ENCODE measurements at regions of chr3 and their contacts with region 1.

Region 1: DNA sequence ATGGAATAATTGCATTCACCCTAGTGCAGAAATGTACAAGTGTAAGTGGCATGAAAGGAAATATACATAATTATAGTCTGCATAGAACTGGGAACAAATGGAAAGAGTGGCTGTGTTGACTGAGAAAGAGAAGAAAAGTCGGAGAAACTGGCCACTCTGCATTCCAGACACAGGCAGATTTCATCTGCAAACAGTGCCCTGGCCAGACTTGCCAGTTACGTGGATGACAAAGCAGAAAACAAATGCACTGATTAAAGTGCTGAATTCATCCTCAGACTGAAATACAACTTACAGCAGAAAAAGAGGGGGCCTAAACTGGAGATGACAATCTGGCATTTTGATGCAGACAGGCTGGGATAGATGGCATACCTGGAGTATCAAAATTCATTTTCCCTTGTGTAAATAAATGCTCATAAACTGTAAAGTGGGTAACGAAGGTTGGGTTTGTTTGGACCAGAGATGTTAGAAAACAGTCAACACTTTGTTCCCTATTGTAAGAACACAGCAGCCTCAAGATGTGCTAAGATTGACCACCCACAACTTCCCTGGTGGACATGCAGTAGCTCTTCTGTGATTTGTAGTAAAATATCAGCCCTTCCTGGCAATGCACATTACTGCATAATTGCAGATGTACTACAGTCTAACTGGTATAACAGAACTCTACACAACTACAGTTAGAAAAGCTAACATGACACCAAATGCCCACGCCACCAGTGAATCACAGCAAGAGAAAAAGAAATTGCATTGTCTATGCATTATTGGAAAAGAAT is 129.6 kb downstream of the FGF12 start:
- DNase-seq: peak; percentile 84 to 92
- H3K4me3 ChIP-seq: peak overlapping the region; percentile 40
- H3K27ac ChIP-seq: peak overlapping the region; percentile 91
- H3K4me1 ChIP-seq: peaks cover 29% of the 10 kb centered on the region
- H3K27me3 ChIP-seq: no peaks in the 10 kb centered on the region
- CTCF ChIP-seq: no peak

Region 2: GRCh38 chr3:191425322-191425734 is 1172.4 kb before region 1 on chr3:
- CTCF ChIA-PET with region 1: no interaction called
- POLR2A ChIA-PET with region 1: no interaction called
- intact Hi-C with region 1: no loop called
- DNase-seq: no peak
- H3K4me3 ChIP-seq: no peak overlapping the region
- H3K27ac ChIP-seq: no peak overlapping the region
- H3K4me1 ChIP-seq: peaks cover 6% of the 10 kb centered on the region
- H3K27me3 ChIP-seq: no peaks in the 10 kb centered on the region
- CTCF ChIP-seq: no peak

Region 3: DNA sequence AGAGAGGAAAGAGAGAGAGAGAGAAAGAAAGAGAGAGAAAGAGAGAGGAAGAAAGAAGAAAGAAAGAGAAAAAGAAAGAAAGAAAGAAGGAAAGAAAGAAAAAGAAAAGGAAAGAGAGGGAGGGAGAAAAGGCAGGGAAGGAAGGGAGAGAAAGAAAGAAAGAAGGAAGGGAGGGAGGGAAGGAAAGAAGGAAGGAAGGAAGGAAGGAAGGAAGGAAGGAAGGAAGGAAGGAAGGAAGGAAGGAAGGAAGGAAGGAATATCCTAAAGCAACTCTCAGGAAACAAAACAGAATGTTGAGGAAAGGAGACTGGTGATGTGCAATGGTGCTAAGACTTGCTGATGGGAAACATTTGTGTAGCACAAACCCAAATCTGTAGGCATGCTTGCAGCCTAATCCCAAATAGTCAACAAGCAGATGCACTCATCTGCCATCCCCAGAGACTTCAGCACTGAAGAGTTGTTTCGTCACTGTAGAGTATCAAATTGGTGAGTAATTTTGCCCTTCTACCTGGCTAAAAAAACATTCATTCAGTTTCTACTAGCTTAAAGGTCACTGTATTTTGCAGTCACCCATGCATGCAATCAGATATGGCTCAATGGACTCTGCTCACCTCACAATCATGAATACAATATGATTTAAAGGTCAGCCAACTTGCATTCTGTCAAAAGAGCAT is 350.7 kb before region 1 on chr3:
- CTCF ChIA-PET with region 1: no interaction called
- POLR2A ChIA-PET with region 1: no interaction called
- intact Hi-C with region 1: no loop called
- DNase-seq: peak; percentile 4 to 76
- H3K4me3 ChIP-seq: no peak overlapping the region
- H3K27ac ChIP-seq: no peak overlapping the region
- H3K4me1 ChIP-seq: peaks cover 19% of the 10 kb centered on the region
- H3K27me3 ChIP-seq: no peaks in the 10 kb centered on the region
- CTCF ChIP-seq: no peak

Region 4: GRCh38 chr3:192444096-192444790 is 153.5 kb before region 1 on chr3:
- CTCF ChIA-PET with region 1: no interaction called
- POLR2A ChIA-PET with region 1: no interaction called
- intact Hi-C with region 1: no loop called
- DNase-seq: peak; percentile 58 to 73
- H3K4me3 ChIP-seq: no peak overlapping the region
- H3K27ac ChIP-seq: no peak overlapping the region
- H3K4me1 ChIP-seq: no peaks in the 10 kb centered on the region
- H3K27me3 ChIP-seq: no peaks in the 10 kb centered on the region
- CTCF ChIP-seq: peak; percentile 100

Region 5: DNA sequence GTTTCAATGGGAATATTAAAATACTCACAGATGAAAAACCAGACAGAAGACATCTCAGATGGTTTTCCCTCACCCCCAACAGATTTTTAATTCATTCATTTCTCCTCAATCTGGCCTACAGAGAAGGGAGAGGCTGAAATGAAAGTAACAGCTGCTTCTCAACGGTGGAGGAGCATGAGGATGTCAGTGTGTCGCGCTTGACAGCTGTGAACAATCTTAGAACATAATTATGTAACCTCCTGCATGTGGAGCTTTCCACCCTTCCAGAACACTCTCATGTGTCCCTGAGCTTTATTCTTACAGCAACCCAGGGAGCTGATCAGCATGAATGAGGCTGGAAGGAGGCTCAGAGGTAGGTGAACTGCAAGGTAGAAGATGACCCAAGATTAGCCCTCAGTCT is 267.2 kb after region 1 on chr3:
- CTCF ChIA-PET with region 1: no interaction called
- POLR2A ChIA-PET with region 1: no interaction called
- intact Hi-C with region 1: no loop called
- DNase-seq: no peak
- H3K4me3 ChIP-seq: no peak overlapping the region
- H3K27ac ChIP-seq: no peak overlapping the region
- H3K4me1 ChIP-seq: no peaks in the 10 kb centered on the region; the same call in 1 of the 2 replicates
- H3K27me3 ChIP-seq: no peaks in the 10 kb centered on the region
- CTCF ChIP-seq: no peak

Region 6: GRCh38 chr3:192887047-192887446 is 289.3 kb after region 1 on chr3:
- CTCF ChIA-PET with region 1: no interaction called
- POLR2A ChIA-PET with region 1: no interaction called
- intact Hi-C with region 1: loop called (anchors 5 kb)
- DNase-seq: peak in 1 of 2 experiments; percentile 62
- H3K4me3 ChIP-seq: no peak overlapping the region
- H3K27ac ChIP-seq: no peak overlapping the region
- H3K4me1 ChIP-seq: peaks cover 71% of the 10 kb centered on the region
- H3K27me3 ChIP-seq: no peaks in the 10 kb centered on the region
- CTCF ChIP-seq: no peak

Measured in PC-9 (cell line).